Adrenal gland (tissue), 19 donors: ENCODE measurements at regions of chr20 and their contacts with region 1.

Region 1: DNA sequence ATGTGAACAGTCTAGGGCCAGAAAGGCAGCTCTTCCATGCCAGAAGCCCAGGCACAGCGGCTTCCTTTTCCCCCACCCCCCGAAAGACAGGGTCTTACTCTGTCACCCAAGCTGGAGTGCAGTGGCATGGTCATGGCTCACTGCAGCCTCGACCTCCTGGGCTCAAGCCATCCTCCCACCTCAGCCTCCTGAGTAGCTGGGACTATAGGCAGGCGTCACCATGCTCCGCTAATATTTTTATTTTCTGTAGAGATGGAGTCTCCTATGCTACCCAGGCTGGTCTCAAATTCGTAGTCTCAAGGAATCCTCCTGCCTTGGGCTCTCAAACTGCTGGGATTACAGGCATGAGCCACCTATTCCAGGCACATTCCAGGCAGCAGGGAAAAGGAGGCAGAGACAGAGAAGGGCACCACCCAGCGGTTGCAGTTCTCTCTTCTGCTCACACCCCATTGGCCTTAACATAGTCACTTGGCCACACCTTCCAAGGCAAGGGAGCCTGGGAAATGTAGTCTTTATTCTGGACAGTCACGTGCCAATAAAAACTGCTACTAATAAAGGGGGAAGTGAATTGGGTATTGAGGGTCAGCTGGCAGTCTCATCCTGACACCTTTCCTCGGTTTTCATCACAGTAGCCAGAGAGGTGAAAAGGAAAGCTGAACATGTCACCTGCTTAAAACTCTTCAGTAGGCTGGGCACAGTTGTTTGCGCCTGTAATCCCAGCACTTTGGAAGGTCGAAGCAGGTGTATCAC is 205.9 kb downstream of the ZMYND8 start:
- DNase-seq: peak; percentile 49 to 81 (median 67)
- H3K4me3 ChIP-seq: no peak overlapping the region
- H3K27ac ChIP-seq: no peak overlapping the region
- H3K4me1 ChIP-seq: no peaks in the 10 kb centered on the region
- H3K27me3 ChIP-seq: no peaks in the 10 kb centered on the region
- CTCF ChIP-seq: peak; percentile 38 to 71 (median 56)
- POLR2A ChIP-seq: no peak

Region 2: GRCh38 chr20:46746956-46747526 is 403.5 kb before region 1 on chr20:
- intact Hi-C with region 1: loop called in 1 of 2 experiments (anchors 5 kb)
- DNase-seq: no peak
- H3K4me3 ChIP-seq: no peak overlapping the region
- H3K27ac ChIP-seq: no peak overlapping the region
- H3K4me1 ChIP-seq: no peaks in the 10 kb centered on the region
- H3K27me3 ChIP-seq: peaks cover 6% of the 10 kb centered on the region
- CTCF ChIP-seq: no peak
- POLR2A ChIP-seq: no peak

Region 3: DNA sequence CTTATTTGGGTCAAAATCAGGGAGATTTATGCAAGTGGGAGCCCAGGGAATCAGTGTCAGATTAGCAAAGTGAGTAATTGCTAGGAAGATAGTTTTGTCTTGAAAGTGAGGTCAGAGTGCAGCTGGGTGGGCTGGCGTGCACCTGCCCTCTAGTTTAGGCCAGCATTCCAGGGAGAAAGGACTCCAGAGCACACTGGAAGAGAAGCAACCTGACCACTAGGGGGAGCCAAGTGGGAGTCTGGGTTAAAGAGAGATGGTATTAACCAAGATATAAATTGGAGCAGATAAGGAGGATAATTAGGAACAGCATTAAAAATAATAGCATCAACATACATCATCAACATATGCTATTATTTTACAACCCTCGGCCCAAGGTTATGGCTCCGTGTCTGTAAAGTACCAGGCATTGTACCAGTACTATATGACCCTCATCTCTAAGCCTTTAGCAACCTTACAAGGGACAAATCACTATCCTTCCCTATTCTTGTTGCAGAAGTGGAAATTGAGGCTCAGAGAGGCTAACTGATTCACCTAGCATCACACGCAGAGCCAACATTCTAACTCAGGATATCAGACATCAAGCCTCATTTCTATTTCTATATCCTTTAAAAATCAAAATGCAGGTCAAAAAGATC is 383.3 kb before region 1 on chr20:
- intact Hi-C with region 1: loop called in 1 of 2 experiments (anchors 10 kb)
- DNase-seq: peak in 4 of 7 donors; percentile 22 to 36 (median 34)
- H3K4me3 ChIP-seq: no peak overlapping the region
- H3K27ac ChIP-seq: no peak overlapping the region
- H3K4me1 ChIP-seq: no peaks in the 10 kb centered on the region
- H3K27me3 ChIP-seq: peaks cover 4% of the 10 kb centered on the region
- CTCF ChIP-seq: peak in 5 of 6 experiments; percentile 39 to 54 (median 40)
- POLR2A ChIP-seq: no peak

Region 4: GRCh38 chr20:47220161-47220582 is 69.6 kb after region 1 on chr20:
- intact Hi-C with region 1: no loop called
- DNase-seq: peak in 4 of 7 donors; percentile 39 to 60 (median 46)
- H3K4me3 ChIP-seq: no peak overlapping the region
- H3K27ac ChIP-seq: no peak overlapping the region
- H3K4me1 ChIP-seq: peaks cover 0 to 7% of the 10 kb centered on the region in 2 donors
- H3K27me3 ChIP-seq: no peaks in the 10 kb centered on the region
- CTCF ChIP-seq: peak; percentile 6 to 54 (median 48)
- POLR2A ChIP-seq: no peak